Psoas muscle (tissue), 8 donors: ENCODE measurements at regions of chr20 and their contacts with region 1.

Region 1: GRCh38 chr20:62376112-62377063 is 9.3 kb upstream of the LAMA5 start:
- DNase-seq: peak in 1 of 2 donors; percentile 72
- ATAC-seq: peak; percentile 80 to 91 (median 90)
- H3K4me3 ChIP-seq: peak overlapping the region; percentile 8
- H3K27ac ChIP-seq: peak overlapping the region; percentile 52
- H3K4me1 ChIP-seq: peaks cover 17% of the 10 kb centered on the region
- H3K27me3 ChIP-seq: no peaks in the 10 kb centered on the region
- CTCF ChIP-seq: peak; percentile 62

Region 2: DNA sequence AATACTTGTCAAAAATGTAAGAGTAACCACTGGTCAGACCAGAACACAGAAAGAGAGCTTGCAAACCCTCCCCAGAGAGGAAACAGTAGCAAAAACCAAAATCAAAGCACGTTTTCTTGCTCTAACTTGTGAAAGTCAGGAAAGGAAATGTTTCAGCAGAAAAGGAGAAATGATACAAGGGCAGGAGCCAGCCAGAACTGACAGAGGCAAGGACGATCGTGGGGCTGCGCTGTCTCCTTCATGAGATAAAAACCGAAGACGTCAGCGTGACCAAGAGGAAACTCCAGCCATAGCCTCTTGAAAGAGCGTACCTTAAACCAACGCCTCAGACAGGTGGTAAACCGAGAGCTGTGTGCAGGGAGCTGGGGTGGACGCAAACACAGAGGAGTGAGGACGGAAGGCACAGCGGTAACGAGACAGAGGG is 36.7 kb before region 1 on chr20:
- intact Hi-C with region 1: loop called in 1 of 2 experiments (anchors 5 kb)
- DNase-seq: peak in 1 of 2 donors; percentile 10
- ATAC-seq: no peak
- H3K4me3 ChIP-seq: no peak overlapping the region
- H3K27ac ChIP-seq: no peak overlapping the region
- H3K4me1 ChIP-seq: no peaks in the 10 kb centered on the region
- H3K27me3 ChIP-seq: no peaks in the 10 kb centered on the region
- CTCF ChIP-seq: no peak